Tibial artery (tissue), 4 donors: ENCODE measurements at regions of chr3 and their contacts with region 1.

Region 1: DNA sequence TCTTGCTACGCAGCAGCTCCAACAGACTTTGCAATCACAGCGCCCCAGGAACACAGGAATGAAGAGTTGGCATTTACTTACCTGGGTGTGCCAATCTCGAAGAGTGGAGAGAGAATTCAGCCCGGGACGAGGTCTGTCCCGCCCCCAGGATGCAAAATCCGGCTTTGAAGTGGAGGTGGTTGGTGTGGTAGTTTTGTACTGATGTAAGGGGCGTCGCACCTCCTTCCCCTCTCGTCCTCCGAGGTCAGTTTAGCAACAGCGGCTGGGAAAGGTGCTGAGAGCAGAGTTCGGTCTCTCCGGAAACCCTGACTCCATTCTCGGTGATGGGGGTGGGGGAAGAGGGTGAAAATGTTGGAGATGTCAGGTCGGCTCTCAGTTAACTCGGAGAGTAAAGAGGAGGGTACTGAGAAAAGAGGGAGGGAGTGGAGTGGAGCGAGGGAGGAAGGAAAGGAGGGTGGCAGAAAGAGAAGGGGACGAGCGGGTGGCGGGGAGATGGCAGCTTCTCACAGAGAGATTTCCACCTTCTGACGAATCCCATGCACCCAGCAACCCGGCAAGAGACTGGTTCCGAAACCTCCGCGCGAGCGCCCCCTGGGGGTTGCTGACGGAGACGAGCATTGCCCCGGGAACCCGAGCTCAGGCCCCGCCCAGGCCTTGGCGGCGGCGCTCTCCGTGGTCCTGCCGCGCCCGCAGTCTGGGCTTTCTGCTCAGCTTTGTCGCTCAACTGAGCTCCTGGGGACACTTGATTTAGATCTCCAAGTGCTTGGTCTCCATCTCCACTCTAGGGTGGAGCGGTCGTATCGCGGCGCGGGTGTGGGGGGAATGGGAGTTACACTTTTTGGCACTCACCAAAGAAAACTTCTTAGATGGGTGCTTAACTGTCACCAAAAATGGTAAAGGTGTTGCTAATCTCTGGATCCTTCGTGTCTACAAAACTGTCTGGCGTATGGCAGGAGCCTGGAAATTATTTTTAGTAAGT is at the start of gene CPNE4:
- DNase-seq: peak; percentile 58 to 75
- H3K4me3 ChIP-seq: peak within 1 kb of the TSS; percentile 10 to 38
- H3K27ac ChIP-seq: no peak within 1 kb of the TSS
- H3K4me1 ChIP-seq: peaks cover 0 to 9% (median 4%) of the 10 kb centered on the region in 4 donors
- H3K27me3 ChIP-seq: peaks cover 0 to 40% of the 10 kb centered on the region in 2 donors
- CTCF ChIP-seq: peak; percentile 45 to 50

Region 2: GRCh38 chr3:131794766-131795388 is 239.9 kb before region 1 on chr3:
- intact Hi-C with region 1: loop called (anchors 10 kb)
- DNase-seq: no peak
- H3K4me3 ChIP-seq: no peak overlapping the region
- H3K27ac ChIP-seq: no peak overlapping the region
- H3K4me1 ChIP-seq: peaks cover 0 to 7% (median 0%) of the 10 kb centered on the region in 4 donors
- H3K27me3 ChIP-seq: peaks cover 0 to 3% of the 10 kb centered on the region in 2 donors
- CTCF ChIP-seq: peak; percentile 64 to 70